PC-9 (cell line): ENCODE measurements at regions of chr5 and their contacts with region 1.

Region 1: GRCh38 chr5:180670586-180671359 is 21.4 kb upstream of the FLT4 start:
- DNase-seq: peak in 1 of 2 experiments; percentile 52
- H3K4me3 ChIP-seq: no peak overlapping the region
- H3K27ac ChIP-seq: no peak overlapping the region
- H3K4me1 ChIP-seq: no peaks in the 10 kb centered on the region
- H3K27me3 ChIP-seq: peaks cover 29% of the 10 kb centered on the region
- CTCF ChIP-seq: peak; percentile 72

Region 2: GRCh38 chr5:178838695-178839685 is 1831.8 kb before region 1 on chr5:
- CTCF ChIA-PET with region 1: interaction called, 11 read pairs
- POLR2A ChIA-PET with region 1: no interaction called
- intact Hi-C with region 1: no loop called
- DNase-seq: peak; percentile 68 to 75
- H3K4me3 ChIP-seq: no peak overlapping the region
- H3K27ac ChIP-seq: no peak overlapping the region
- H3K4me1 ChIP-seq: no peaks in the 10 kb centered on the region
- H3K27me3 ChIP-seq: peaks cover 3% of the 10 kb centered on the region; the same call in 1 of the 2 replicates
- CTCF ChIP-seq: peak; percentile 71